PC-3 (cell line): ENCODE measurements at regions of chr5 and their contacts with region 1.

Region 1: GRCh38 chr5:40798012-40798855 is at the start of gene PRKAA1:
- DNase-seq: peak; percentile 91
- ATAC-seq: peak; percentile 81
- H3K4me3 ChIP-seq: peak within 1 kb of the TSS; percentile 83
- H3K27ac ChIP-seq: peak within 1 kb of the TSS; percentile 87
- H3K4me1 ChIP-seq: peaks cover 26% of the 10 kb centered on the region
- H3K27me3 ChIP-seq: no peaks in the 10 kb centered on the region
- CTCF ChIP-seq: peak; percentile 47
- total RNA-seq, gene PRKAA1: 84.5 and 86.0 TPM in 2 replicates

Region 2: DNA sequence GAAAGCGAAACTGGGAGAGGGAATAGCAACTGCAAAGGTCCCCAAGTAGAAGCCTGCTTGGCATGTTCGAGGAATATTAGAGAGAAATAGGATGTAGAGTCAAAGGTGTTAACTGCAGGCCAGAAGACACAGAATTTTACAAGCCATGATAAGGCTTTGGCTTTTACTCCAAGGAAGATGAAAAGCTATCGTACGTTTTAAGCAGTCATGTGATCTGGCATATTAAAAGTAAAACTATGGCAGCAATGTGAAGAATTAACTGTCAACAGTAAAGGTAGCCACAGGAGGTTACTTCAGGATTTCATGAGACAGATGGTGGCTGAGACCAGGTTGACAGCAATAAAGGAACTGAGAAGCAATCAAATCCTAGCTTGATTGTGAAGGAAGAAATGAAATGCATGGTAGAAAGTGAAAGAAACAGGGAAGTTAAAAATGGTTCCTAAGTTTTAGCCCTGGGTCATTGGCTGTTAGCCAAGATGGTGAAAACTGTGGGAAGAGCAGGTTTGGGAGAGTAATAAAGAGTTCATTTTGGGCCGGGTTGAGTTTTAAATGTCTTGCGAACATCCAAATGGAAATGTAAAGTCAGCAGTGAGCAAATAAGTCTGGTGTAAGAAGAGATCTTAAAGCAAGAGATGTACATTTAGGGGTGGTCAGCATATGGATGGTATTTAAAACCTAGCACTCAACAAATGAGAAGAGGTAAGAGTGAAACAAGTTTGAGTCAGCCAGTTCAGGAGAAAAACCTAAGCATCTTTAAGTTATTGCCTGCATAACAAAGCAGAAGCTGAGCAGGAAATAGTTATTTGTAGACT is 22.2 kb before region 1 on chr5:
- CTCF ChIA-PET with region 1: interaction called, 11 read pairs
- POLR2A ChIA-PET with region 1: no interaction called
- intact Hi-C with region 1: loop called (anchors 1 kb)
- DNase-seq: no peak
- ATAC-seq: no peak
- H3K4me3 ChIP-seq: no peak overlapping the region
- H3K27ac ChIP-seq: peak overlapping the region; percentile 73
- H3K4me1 ChIP-seq: peaks cover 29% of the 10 kb centered on the region
- H3K27me3 ChIP-seq: no peaks in the 10 kb centered on the region
- CTCF ChIP-seq: no peak

Region 3: GRCh38 chr5:40860711-40861110 is 62.5 kb after region 1 on chr5:
- CTCF ChIA-PET with region 1: no interaction called
- POLR2A ChIA-PET with region 1: no interaction called
- intact Hi-C with region 1: no loop called
- DNase-seq: no peak
- ATAC-seq: no peak
- H3K4me3 ChIP-seq: no peak overlapping the region
- H3K27ac ChIP-seq: no peak overlapping the region
- H3K4me1 ChIP-seq: no peaks in the 10 kb centered on the region
- H3K27me3 ChIP-seq: no peaks in the 10 kb centered on the region
- CTCF ChIP-seq: no peak

Region 4: GRCh38 chr5:40909233-40909632 is 111.0 kb after region 1 on chr5 and contains the start of gene C7:
- CTCF ChIA-PET with region 1: no interaction called
- POLR2A ChIA-PET with region 1: no interaction called
- intact Hi-C with region 1: no loop called
- DNase-seq: no peak
- ATAC-seq: no peak
- H3K4me3 ChIP-seq: no peak within 1 kb of the TSS
- H3K27ac ChIP-seq: no peak within 1 kb of the TSS
- H3K4me1 ChIP-seq: peaks cover 20% of the 10 kb centered on the region
- H3K27me3 ChIP-seq: no peaks in the 10 kb centered on the region
- CTCF ChIP-seq: no peak
- total RNA-seq, gene C7: not detected in 2 replicates